ENCODE measurements at regions of chr11 and their contacts with region 1.

Region 1: GRCh38 chr11:33736148-33736809 is at the start of gene CD59:
- DNase-seq: peak; percentile 94
- H3K4me3 ChIP-seq: peak within 1 kb of the TSS; percentile 51 to 86 (median 64)
- H3K27ac ChIP-seq: peak within 1 kb of the TSS; percentile 97
- H3K4me1 ChIP-seq: peaks cover 38% of the 10 kb centered on the region
- H3K27me3 ChIP-seq: no peaks in the 10 kb centered on the region
- CTCF ChIP-seq: no peak
- total RNA-seq, gene CD59: 1,038 to 1,326 TPM

Region 2: GRCh38 chr11:33161120-33162005 is 574.9 kb before region 1 on chr11 and contains the start of gene CSTF3:
- CTCF ChIA-PET with region 1: no interaction called
- dilution Hi-C with region 1: no loop called
- in situ Hi-C with region 1: no loop called
- intact Hi-C with region 1: loop called (anchors 2 kb)
- DNase-seq: peak; percentile 97
- H3K4me3 ChIP-seq: peak within 1 kb of the TSS; percentile 87 to 100 (median 99)
- H3K27ac ChIP-seq: peak within 1 kb of the TSS; percentile 97
- H3K4me1 ChIP-seq: peaks cover 24% of the 10 kb centered on the region
- H3K27me3 ChIP-seq: no peaks in the 10 kb centered on the region
- CTCF ChIP-seq: peak; percentile 2 to 38
- total RNA-seq, gene CSTF3: 21.3 to 32.9 TPM

Region 3: DNA sequence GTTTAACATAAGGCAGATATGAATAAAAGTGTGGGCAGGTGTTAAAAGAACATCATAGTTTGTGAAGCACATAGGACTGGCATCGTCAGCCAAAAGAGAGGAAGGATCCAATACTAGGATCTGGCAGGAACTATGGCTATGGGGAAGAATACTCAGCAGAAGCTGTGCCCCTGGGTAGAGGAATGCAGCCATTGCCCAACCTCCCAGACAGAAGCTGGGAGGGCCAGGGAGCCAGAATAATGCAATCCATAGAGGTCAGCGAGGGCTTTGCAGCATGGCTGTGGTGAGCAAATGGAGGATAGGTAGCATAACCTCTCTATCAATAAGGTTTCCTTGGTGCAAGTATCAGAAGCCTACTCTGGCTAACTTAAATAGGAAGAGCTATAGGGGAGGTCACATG is 563.3 kb before region 1 on chr11:
- CTCF ChIA-PET with region 1: no interaction called
- dilution Hi-C with region 1: no loop called
- in situ Hi-C with region 1: no loop called
- intact Hi-C with region 1: no loop called
- DNase-seq: no peak
- H3K4me3 ChIP-seq: no peak overlapping the region
- H3K27ac ChIP-seq: no peak overlapping the region
- H3K4me1 ChIP-seq: no peaks in the 10 kb centered on the region
- H3K27me3 ChIP-seq: no peaks in the 10 kb centered on the region
- CTCF ChIP-seq: no peak

Region 4: DNA sequence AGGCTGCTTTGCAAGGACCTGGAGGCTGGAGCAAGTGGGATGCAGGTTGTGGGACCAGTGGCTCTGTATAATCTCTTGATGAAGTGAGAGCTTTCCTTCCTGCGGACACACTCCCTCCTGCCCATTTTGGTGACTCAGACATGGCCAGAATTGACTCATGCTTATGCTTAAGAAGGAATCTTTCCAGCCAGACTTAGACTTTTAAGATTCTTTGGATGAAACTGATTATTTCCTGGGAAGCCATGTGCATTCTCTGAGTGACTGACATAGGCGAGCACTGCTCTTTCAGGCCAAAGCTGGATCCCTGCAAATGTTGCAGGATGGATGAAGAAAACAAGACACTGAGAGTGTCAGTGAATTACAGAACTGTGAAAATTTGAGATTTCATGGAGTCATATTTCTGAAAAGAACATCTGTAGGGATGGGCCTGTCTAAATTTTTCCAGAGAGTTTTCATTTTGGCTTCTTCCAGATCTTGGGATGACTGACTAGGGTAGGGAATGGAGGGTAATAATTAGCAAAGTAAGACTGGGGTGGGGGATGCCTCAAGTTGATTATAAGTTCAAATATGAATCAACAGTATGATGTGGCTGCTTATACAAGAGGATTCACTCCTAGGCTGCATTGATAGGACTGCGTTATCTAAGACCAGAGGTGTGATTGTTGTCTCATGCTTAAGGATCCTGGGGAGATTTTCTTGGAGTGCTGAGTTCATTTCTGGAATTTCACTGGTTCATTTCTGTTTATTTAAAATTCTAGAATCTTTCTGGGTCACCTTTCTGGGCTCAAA is 283.2 kb before region 1 on chr11:
- CTCF ChIA-PET with region 1: no interaction called
- dilution Hi-C with region 1: no loop called
- in situ Hi-C with region 1: no loop called
- intact Hi-C with region 1: no loop called
- DNase-seq: peak; percentile 70
- H3K4me3 ChIP-seq: no peak overlapping the region
- H3K27ac ChIP-seq: no peak overlapping the region
- H3K4me1 ChIP-seq: peaks cover 18% of the 10 kb centered on the region
- H3K27me3 ChIP-seq: no peaks in the 10 kb centered on the region
- CTCF ChIP-seq: no peak

Region 5: DNA sequence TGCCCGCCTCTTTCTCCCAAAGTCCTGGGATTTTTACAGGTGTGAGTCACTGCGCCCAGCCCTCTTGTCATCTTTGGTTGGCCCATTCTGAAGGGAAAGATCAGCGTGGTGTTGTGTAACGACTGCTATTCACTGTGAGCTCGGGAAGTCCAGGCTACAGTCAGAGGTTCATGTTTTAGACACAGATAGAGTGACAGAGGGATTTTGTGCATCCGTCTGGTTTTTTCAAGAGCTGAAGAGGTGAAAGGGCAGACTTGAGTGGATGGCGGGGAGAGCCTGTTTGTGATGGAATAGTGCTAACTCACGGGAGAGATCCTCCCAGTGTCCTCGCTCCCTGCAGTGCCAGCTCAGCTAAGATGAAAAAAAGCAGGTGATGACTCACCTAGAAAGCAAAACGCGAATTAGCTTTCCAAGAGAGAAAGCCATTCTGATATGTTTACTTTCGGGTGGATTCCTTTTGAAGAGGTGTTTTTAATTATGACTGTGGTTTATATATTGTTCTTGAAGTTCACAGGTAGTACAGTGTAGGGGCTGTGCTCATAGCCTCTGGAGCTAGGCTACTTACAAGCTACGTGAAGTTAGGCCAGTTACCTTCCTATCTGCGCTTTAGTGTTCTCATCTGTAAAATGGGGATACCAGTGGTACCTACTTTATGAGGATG is 102.9 kb before region 1 on chr11:
- CTCF ChIA-PET with region 1: no interaction called
- dilution Hi-C with region 1: no loop called
- in situ Hi-C with region 1: no loop called
- intact Hi-C with region 1: loop called (anchors 5 kb)
- DNase-seq: peak; percentile 98
- H3K4me3 ChIP-seq: no peak overlapping the region
- H3K27ac ChIP-seq: peak overlapping the region; percentile 97
- H3K4me1 ChIP-seq: peaks cover 61% of the 10 kb centered on the region
- H3K27me3 ChIP-seq: no peaks in the 10 kb centered on the region
- CTCF ChIP-seq: no peak

Region 6: GRCh38 chr11:33700425-33701271 is 35.6 kb before region 1 on chr11 and contains the start of gene C11orf91:
- CTCF ChIA-PET with region 1: no interaction called
- dilution Hi-C with region 1: loop called (anchors 5 kb)
- in situ Hi-C with region 1: no loop called
- intact Hi-C with region 1: loop called (anchors 1 kb)
- DNase-seq: peak; percentile 92
- H3K4me3 ChIP-seq: peak within 1 kb of the TSS; percentile 5 to 70 (median 22)
- H3K27ac ChIP-seq: peak within 1 kb of the TSS; percentile 98
- H3K4me1 ChIP-seq: peaks cover 84% of the 10 kb centered on the region
- H3K27me3 ChIP-seq: no peaks in the 10 kb centered on the region
- CTCF ChIP-seq: no peak
- total RNA-seq, gene C11orf91: 7.6 TPM in 1 of 2 donors, not detected in the other

Region 7: GRCh38 chr11:33716236-33716635 is 20.0 kb before region 1 on chr11:
- CTCF ChIA-PET with region 1: interaction called, 3 read pairs
- dilution Hi-C with region 1: no loop called
- in situ Hi-C with region 1: no loop called
- intact Hi-C with region 1: loop called (anchors 1 kb)
- DNase-seq: peak; percentile 80
- H3K4me3 ChIP-seq: no peak overlapping the region
- H3K27ac ChIP-seq: peak overlapping the region; percentile 93
- H3K4me1 ChIP-seq: peaks cover 59% of the 10 kb centered on the region
- H3K27me3 ChIP-seq: no peaks in the 10 kb centered on the region
- CTCF ChIP-seq: peak; percentile 44 to 58

Measured in mammary epithelial cell (primary cell).